Activated B cell treated with CpG ODN at 0.5 μM for 24 hours (primary cell): ENCODE measurements at regions of chr3 and their contacts with region 1.

Region 1: DNA sequence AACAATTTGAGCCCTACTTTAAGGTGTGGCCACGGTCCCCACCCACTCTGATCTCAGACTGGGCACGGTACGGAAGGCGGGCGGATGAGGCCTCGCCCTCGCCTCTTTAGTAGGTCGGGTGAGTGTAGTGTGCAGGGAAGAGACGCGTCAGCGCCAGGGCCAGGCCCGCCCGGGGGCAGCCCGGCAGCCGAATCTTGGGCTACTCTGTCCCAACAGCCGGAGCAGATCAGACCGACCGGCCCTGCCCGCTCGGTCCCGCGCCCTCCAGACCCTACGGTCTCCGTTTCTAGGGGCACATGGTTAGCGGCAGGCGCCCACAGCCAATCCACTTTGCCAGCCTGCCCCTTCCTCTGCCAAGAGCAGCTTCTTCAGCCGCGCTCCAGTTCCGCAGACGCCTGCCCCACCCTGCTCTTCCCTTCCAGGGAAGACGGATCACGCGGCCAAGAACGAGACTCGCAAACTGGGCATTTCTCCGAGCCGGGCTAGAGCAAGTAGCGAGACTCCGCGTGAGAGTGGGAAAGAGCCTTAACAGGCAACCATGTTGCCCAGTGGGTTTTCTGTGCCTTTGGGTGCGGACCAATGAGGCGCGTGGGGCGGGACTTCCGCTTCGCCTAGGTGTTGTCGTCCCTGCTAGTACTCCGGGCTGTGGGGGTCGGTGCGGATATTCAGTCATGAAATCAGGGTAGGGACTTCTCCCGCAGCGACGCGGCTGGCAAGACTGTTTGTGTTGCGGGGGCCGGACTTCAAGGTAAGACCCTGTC is at the start of gene RNF13:
- DNase-seq: peak; percentile 87
- ATAC-seq: peak; percentile 88
- H3K4me3 Mint-ChIP-seq: peak within 1 kb of the TSS; percentile 99
- H3K27ac Mint-ChIP-seq: peak within 1 kb of the TSS; percentile 100
- H3K4me1 Mint-ChIP-seq: peaks cover 53% of the 10 kb centered on the region
- H3K27me3 Mint-ChIP-seq: peaks cover 3% of the 10 kb centered on the region
- CTCF ChIP-seq: no peak
- total RNA-seq, gene RNF13: 57.6 and 59.6 TPM in 2 replicates

Region 2: DNA sequence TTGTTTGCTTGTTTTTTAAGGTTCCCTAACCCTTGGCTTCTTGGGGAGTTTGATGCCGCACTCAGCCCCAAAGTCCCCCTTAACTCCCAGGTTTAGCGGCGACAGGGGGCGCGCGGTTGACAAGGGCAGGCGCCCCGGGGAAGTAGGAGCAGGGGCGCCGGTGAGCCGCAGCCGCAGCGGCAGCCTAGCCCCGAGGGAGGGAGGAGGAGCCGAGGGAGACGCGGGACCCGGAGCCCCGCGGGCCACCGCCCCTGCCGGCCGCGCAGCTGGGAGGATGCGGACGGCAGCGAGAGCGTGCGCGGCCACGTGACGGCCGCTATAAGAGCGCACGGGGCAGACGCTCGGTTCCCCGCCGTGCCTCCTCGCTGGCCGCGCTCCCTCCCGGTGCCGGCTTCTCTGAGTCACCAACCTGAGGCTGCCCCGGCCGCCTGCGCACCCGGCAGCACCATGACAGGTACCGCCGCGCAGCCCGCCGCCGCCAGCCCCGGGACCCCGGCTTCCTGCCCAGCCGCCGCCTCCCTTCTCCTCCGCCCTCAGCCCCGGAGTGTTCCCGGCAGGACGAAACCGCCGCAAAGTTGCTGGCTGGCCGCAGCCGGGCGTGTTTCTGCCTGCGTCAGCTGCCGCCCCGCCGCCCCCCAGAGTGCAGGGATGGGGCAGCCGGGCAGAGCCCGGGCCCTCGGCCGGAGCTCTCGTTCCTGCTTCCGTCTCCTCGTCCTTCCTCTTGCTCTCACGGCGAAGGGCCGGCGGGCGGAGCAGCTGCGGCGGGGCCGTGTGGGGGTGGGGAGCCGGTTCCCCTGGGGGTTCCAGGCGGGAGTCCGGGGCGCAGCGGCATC is 821.4 kb before region 1 on chr3 and contains the start of gene GYG1:
- CTCF ChIA-PET with region 1: no interaction called
- POLR2A ChIA-PET with region 1: no interaction called
- intact Hi-C with region 1: loop called (anchors 1 kb)
- DNase-seq: peak; percentile 72
- ATAC-seq: peak; percentile 91
- H3K4me3 Mint-ChIP-seq: peak within 1 kb of the TSS; percentile 84
- H3K27ac Mint-ChIP-seq: peak within 1 kb of the TSS; percentile 69
- H3K4me1 Mint-ChIP-seq: peaks cover 21% of the 10 kb centered on the region
- H3K27me3 Mint-ChIP-seq: no peaks in the 10 kb centered on the region
- CTCF ChIP-seq: no peak
- total RNA-seq, gene GYG1: 20.2 and 21.8 TPM in 2 replicates

Region 3: DNA sequence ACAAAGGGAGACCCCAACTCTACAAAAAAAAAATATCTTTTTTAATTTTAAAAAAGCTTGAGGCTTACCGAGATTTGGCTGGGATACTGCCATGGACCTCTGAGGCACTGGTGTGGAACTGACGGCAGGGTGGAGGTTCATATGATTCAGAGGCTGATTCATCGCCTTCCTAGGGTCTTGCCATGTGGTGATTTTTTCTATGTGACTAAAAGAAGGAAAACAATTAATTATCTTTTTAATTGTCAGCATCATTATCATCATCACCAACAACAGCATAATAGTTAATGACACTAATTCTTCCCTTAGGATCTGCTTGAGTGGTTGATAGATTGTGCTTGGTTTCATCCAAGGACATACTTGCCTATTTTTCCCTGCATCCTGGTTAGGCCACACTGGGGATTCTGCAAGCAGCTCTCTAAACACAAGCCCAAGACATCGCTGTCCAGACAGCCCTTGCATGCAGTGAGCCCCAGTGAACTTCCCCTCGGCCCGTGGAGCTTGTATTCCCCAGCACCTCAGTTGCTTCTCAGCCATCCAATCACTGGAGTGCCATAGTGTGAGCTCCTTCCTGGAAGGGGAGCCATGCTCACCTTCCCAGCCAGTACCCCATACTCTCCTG is 239.9 kb before region 1 on chr3:
- CTCF ChIA-PET with region 1: interaction called, 6 read pairs
- POLR2A ChIA-PET with region 1: no interaction called
- intact Hi-C with region 1: loop called (anchors 1 kb)
- DNase-seq: no peak
- ATAC-seq: no peak
- H3K4me3 Mint-ChIP-seq: no peak overlapping the region
- H3K27ac Mint-ChIP-seq: no peak overlapping the region
- H3K4me1 Mint-ChIP-seq: peaks cover 4% of the 10 kb centered on the region
- H3K27me3 Mint-ChIP-seq: no peaks in the 10 kb centered on the region
- CTCF ChIP-seq: no peak

Region 4: GRCh38 chr3:149771652-149772271 is 41.0 kb before region 1 on chr3:
- CTCF ChIA-PET with region 1: interaction called, 40 read pairs
- POLR2A ChIA-PET with region 1: interaction called, 3 read pairs
- intact Hi-C with region 1: no loop called
- DNase-seq: no peak
- ATAC-seq: peak; percentile 54
- H3K4me3 Mint-ChIP-seq: no peak overlapping the region
- H3K27ac Mint-ChIP-seq: no peak overlapping the region
- H3K4me1 Mint-ChIP-seq: no peaks in the 10 kb centered on the region
- H3K27me3 Mint-ChIP-seq: peaks cover 7% of the 10 kb centered on the region
- CTCF ChIP-seq: peak; percentile 37

Region 5: DNA sequence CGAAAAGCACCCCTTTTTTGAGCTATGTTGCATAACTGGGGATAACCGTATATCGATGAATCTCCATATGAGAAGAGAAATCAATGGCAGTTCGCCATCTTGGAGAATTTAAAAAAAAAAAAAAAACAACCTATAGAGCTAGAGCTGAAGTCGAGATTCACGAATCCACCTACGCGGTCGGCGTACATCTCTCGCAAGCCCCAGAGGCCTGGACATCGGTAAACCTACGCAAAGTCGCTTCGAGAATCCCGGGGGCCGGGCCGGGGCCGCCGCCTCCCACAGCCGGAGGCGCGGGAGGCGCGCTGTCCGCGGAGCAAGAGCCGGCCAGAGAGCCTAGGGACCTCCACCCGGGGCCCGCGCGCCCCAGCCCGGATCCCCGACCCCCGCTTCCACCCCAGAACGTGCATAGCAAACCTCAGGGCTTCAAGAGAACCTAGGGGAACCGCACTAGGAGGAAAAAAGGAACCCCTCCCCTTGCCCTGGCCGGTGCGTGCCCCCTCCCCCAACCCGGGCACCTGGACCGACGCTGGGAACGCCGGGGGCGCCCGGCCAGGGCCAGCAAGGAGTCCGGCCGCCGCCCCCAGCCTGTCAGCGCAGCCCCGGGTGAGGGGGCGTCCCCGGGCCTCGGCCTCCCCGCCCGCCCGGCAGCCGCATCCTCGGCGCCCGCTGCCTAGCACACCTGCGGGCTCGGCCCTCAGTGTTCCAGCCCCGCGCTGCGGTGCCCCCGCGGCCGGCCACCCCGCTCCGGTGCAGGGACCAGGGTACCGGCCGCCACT is 157.3 kb after region 1 on chr3:
- CTCF ChIA-PET with region 1: no interaction called
- POLR2A ChIA-PET with region 1: interaction called, 4 read pairs
- intact Hi-C with region 1: loop called (anchors 5 kb)
- DNase-seq: peak; percentile 76
- ATAC-seq: peak; percentile 76
- H3K4me3 Mint-ChIP-seq: peak overlapping the region; percentile 90
- H3K27ac Mint-ChIP-seq: peak overlapping the region; percentile 53
- H3K4me1 Mint-ChIP-seq: peaks cover 23% of the 10 kb centered on the region
- H3K27me3 Mint-ChIP-seq: peaks cover 15% of the 10 kb centered on the region
- CTCF ChIP-seq: no peak

Region 6: GRCh38 chr3:150603153-150603979 is 790.6 kb after region 1 on chr3 and contains the start of gene SELENOT:
- CTCF ChIA-PET with region 1: no interaction called
- POLR2A ChIA-PET with region 1: interaction called, 3 read pairs
- intact Hi-C with region 1: loop called (anchors 2 kb)
- DNase-seq: peak; percentile 94
- ATAC-seq: peak; percentile 62
- H3K4me3 Mint-ChIP-seq: peak within 1 kb of the TSS; percentile 100
- H3K27ac Mint-ChIP-seq: peak within 1 kb of the TSS; percentile 100
- H3K4me1 Mint-ChIP-seq: peaks cover 87% of the 10 kb centered on the region
- H3K27me3 Mint-ChIP-seq: no peaks in the 10 kb centered on the region
- CTCF ChIP-seq: no peak
- total RNA-seq, gene SELENOT: 137 and 145 TPM in 2 replicates